Activated T-helper 1 cell treated with anti-CD3 and anti-CD28 coated beads, Interleukin-12 subunit alpha, Interleukin-12 subunit beta, Interleukin-2, Interleukin-4 antibody, amounts not matched to agents 30 ng/mL and 10 ng/mL and 1 ng/mL, durations not matched to agents 14 hours and 24 hours and 36 hours (primary cell): ENCODE measurements at regions of chrX and their contacts with region 1.

Region 1: DNA sequence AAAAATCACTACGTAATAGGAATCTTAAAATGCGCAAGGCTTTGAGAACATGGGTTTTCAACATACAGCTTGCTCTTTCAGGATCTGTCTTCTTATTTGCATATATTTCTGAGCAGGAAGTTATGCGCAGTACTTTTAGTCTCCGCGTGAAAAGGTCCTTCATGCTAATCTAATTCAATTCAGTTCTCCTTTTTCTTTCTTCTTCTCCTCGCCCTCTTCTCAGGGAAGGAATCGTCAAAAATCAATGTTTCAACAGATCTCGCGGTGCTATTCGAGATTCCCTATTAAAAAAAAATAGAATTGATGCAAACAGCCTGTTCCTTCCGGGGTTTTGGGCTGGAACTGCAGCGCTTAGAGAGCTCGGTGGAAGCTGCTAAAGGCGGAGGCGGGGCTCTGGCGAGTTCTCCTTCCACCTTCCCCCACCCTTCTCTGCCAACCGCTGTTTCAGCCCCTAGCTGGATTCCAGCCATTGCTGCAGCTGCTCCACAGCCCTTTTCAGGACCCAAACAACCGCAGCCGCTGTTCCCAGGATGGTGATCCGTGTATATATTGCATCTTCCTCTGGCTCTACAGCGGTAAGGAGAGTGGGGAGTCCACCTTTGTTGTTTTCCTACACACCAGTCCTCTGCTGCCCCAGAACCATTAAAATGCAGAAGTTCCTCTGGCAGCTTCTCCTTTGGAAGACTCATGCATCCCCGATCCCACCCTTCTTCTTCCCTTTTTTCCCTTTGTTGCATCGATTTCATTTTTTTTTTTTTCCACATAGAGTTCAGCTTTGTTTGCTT is at the starts of genes HMGN5 and SH3BGRL:
- DNase-seq: peak; percentile 53
- H3K4me3 Mint-ChIP-seq: peak within 1 kb of the TSS; percentile 93
- H3K27ac Mint-ChIP-seq: peak within 1 kb of the TSS; percentile 90
- H3K4me1 Mint-ChIP-seq: peaks cover 39% of the 10 kb centered on the region
- H3K27me3 Mint-ChIP-seq: no peaks in the 10 kb centered on the region
- total RNA-seq, gene HMGN5: 0.73 and 1.3 TPM in 2 replicates
- total RNA-seq, gene SH3BGRL: 37.6 and 38.4 TPM in 2 replicates

Region 2: DNA sequence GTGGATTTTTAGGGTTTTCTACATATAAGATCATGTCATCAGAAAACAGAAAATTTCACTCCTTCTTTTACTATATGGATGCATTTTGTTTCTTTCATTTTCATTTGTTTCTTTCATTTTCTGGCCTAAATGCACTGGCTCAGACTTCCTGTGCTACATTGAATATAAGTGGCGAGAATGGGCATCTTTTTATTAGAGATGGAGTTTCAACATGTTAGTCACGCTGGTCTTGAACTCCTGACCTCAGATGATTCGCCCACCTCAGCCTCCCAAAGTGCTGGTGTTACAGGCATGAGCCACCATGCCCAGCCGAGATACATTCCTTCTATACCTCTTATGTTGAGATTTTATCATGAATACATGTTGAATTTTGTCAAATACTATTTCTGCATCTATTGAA is 454.0 kb before region 1 on chrX:
- intact Hi-C with region 1: no loop called
- DNase-seq: no peak
- H3K4me3 Mint-ChIP-seq: no peak overlapping the region
- H3K27ac Mint-ChIP-seq: no peak overlapping the region
- H3K4me1 Mint-ChIP-seq: peaks cover 14% of the 10 kb centered on the region
- H3K27me3 Mint-ChIP-seq: no peaks in the 10 kb centered on the region

Region 3: DNA sequence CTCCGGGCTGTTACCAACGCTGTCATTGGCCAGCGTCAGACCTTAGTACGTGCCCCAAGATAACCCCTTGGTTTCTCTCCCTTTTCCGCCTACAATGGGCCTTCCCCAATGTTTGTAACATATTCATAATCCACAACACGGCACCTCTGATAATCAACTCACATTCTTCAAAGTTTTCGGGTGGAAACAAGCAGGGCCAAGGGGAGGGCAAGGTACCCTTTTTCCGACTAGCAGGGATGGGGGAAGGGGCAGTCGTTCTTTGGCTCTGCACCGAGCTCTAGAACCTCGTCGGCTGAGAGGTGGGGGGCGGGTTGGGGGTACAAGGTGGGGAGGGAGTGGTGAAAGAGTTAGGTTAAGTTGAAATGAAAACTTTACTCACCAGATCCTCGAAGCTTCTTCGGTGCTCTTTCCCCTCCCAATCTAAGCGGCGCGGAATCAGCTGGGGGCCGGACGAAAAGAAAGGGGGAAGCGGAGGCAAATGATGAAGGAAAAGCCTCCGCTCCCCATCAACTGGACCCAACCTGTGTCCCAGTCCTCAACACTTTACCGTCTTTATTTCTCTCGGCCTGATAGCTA is 393.6 kb before region 1 on chrX:
- intact Hi-C with region 1: loop called (anchors 1 kb)
- DNase-seq: peak; percentile 69
- H3K4me3 Mint-ChIP-seq: peak overlapping the region; percentile 89
- H3K27ac Mint-ChIP-seq: peak overlapping the region; percentile 89
- H3K4me1 Mint-ChIP-seq: peaks cover 19% of the 10 kb centered on the region
- H3K27me3 Mint-ChIP-seq: peaks cover 3% of the 10 kb centered on the region

Region 4: GRCh38 chrX:81110286-81110685 is 91.6 kb before region 1 on chrX:
- intact Hi-C with region 1: no loop called
- DNase-seq: no peak
- H3K4me3 Mint-ChIP-seq: no peak overlapping the region
- H3K27ac Mint-ChIP-seq: no peak overlapping the region
- H3K4me1 Mint-ChIP-seq: no peaks in the 10 kb centered on the region
- H3K27me3 Mint-ChIP-seq: no peaks in the 10 kb centered on the region

Region 5: DNA sequence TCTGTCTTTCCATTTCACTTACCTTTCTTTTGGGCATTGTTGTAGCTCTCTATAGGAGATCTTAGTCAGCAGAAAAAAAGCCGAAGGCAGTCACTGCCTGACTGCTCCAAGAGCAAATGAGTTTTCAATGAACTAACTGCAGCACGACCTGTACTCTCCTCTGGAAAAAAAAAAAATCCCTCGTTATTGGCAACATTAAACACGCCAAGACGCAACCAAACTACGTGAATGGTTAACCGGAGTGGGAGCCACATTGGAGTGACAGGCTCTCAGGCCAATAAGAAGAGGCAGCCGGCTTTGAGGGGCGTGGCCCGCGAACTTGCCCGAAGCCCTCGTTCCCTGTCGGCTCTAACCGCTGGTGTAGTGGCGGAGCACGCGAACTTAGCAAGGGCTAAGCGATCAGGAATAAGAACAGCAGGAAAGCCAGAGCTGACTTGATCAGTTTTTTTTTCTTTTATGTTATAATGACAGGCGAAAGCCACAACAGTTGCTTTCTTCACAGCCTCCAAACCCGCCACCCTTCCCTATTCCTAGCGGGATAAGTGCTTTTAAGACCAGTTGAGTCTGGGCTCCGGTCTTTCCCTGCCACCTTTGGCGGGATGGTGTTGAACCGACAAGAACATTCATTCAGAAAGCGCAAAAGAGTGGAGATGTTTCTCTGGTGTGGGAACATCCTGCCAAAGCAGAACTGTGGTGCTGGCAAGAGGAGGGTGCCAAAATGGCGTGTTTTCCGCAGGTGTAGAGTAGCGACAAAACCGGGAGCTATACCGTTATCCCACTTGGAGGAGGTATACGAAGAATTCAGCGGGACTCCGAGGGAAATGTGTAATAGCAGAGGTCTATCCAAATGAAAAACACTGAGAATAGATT is 80.1 kb before region 1 on chrX:
- intact Hi-C with region 1: loop called (anchors 1 kb)
- DNase-seq: peak; percentile 78
- H3K4me3 Mint-ChIP-seq: peak overlapping the region; percentile 94
- H3K27ac Mint-ChIP-seq: peak overlapping the region; percentile 76
- H3K4me1 Mint-ChIP-seq: peaks cover 18% of the 10 kb centered on the region
- H3K27me3 Mint-ChIP-seq: peaks cover 9% of the 10 kb centered on the region

Region 6: GRCh38 chrX:81280148-81280547 is 78.3 kb after region 1 on chrX:
- intact Hi-C with region 1: loop called (anchors 5 kb)
- DNase-seq: no peak
- H3K4me3 Mint-ChIP-seq: no peak overlapping the region
- H3K27ac Mint-ChIP-seq: no peak overlapping the region
- H3K4me1 Mint-ChIP-seq: no peaks in the 10 kb centered on the region
- H3K27me3 Mint-ChIP-seq: no peaks in the 10 kb centered on the region